CD4-positive, alpha-beta T cell (primary cell): ENCODE measurements at regions of chr3 and their contacts with region 1.

Region 1: DNA sequence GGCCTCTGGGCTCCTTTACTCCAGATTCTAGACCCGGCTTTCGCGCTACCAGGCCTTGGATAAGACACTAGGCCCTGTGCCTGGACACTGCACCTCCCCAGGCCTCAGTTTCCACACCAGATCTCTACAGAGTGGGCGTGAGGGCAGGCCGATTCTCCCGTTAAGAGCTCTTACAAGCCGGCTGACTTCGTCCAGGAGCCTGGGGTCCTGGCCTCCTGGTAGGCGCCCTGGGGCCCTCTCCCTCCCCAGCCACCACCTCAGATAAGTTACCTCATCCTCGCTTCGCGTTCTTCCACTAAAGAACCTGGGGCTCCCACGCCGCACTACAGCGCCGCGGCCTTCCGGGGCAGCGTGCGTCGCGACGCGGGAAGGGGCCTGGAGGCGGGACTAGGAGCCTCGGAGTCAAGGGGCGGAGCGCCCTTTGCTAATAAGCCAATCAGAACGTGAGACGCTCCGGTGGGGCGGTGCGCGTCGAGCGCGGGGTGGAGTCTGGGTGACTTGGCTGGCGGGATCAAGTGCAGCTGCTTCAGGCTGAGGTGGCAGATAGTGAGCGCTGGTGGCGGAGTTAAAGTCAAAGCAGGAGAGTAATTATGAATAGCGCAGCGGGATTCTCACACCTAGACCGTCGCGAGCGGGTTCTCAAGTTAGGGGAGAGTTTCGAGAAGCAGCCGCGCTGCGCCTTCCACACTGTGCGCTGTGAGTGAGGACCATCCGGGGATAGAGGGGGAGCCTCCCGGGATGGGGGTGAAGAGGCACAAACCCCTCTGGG is at the starts of genes EAF2 and IQCB1:
- DNase-seq: peak; percentile 90 to 98 (median 95)
- ATAC-seq: peak; percentile 95
- H3K4me3 ChIP-seq: peak within 1 kb of the TSS; percentile 70
- H3K4me3 Mint-ChIP-seq: peak within 1 kb of the TSS; percentile 92
- H3K27ac ChIP-seq: peak within 1 kb of the TSS; percentile 83 to 84
- H3K27ac Mint-ChIP-seq: peak within 1 kb of the TSS; percentile 79
- H3K4me1 ChIP-seq: peaks cover 25% of the 10 kb centered on the region
- H3K4me1 Mint-ChIP-seq: peaks cover 61% of the 10 kb centered on the region
- H3K27me3 ChIP-seq: no peaks in the 10 kb centered on the region
- H3K27me3 Mint-ChIP-seq: no peaks in the 10 kb centered on the region
- CTCF ChIP-seq: no peak
- total RNA-seq, gene EAF2: 3.7 to 4.4 TPM
- total RNA-seq, gene IQCB1: 39.6 to 41.3 TPM

Region 2: GRCh38 chr3:120348981-120349818 is 1485.7 kb before region 1 on chr3 and contains the start of gene LRRC58:
- CTCF ChIA-PET with region 1: no interaction called
- POLR2A ChIA-PET with region 1: interaction called, 5 read pairs
- intact Hi-C with region 1: loop called in 1 of 2 experiments (anchors 10 kb)
- DNase-seq: peak; percentile 78 to 96 (median 87)
- ATAC-seq: peak; percentile 86
- H3K4me3 ChIP-seq: peak within 1 kb of the TSS; percentile 65
- H3K4me3 Mint-ChIP-seq: peak within 1 kb of the TSS; percentile 93
- H3K27ac ChIP-seq: peak within 1 kb of the TSS; percentile 65 to 74
- H3K27ac Mint-ChIP-seq: peak within 1 kb of the TSS; percentile 94
- H3K4me1 ChIP-seq: peaks cover 18% of the 10 kb centered on the region
- H3K4me1 Mint-ChIP-seq: peaks cover 52% of the 10 kb centered on the region
- H3K27me3 ChIP-seq: peaks cover 0 to 3% of the 10 kb centered on the region in 2 experiments
- H3K27me3 Mint-ChIP-seq: no peaks in the 10 kb centered on the region
- CTCF ChIP-seq: peak; percentile 45
- total RNA-seq, gene LRRC58: 16.6 to 17.7 TPM

Region 3: DNA sequence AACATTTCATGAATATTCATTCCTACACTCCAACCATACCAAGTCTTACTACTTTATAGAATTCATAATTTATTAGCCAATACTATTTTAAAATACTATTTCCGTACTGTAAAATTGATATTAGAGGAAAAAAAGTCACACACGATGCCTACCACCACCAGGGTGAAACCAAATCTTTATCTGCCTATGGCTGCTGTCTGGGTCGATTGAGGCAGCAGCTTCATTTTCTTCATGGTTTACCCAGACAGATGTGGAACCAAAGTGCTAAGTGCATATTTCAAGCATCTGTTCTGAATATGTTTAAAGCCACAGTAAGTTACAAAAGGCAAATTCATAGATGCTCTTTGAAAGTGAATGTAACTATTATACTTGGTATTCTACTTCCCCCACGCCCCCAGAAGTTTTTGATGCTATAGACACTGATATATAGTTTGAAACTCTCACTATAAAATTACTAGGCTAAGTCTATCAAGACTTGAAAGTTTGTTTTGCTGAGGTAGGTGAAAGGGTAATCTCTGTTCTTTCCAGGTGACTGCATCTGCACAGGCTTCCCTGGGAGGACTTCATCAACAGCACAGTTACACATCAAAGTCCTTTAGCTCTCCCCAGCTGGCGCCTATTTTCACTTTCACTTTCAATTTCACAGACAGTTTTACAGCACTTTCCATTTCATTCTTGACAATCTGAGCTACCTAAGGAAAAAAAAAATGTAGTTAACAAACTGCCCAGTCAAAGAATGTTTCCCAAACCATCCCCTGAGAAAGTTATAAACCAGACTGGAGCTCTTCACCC is 403.0 kb before region 1 on chr3:
- CTCF ChIA-PET with region 1: no interaction called
- POLR2A ChIA-PET with region 1: no interaction called
- intact Hi-C with region 1: loop called in 1 of 2 experiments (anchors 5 kb)
- DNase-seq: peak; percentile 0 to 89 (median 28)
- ATAC-seq: peak; percentile 96
- H3K4me3 ChIP-seq: peak overlapping the region; percentile 28
- H3K4me3 Mint-ChIP-seq: peak overlapping the region; percentile 73
- H3K27ac ChIP-seq: no peak overlapping the region
- H3K27ac Mint-ChIP-seq: peak overlapping the region; percentile 82
- H3K4me1 ChIP-seq: peaks cover 4% of the 10 kb centered on the region
- H3K4me1 Mint-ChIP-seq: peaks cover 16% of the 10 kb centered on the region
- H3K27me3 ChIP-seq: no peaks in the 10 kb centered on the region
- H3K27me3 Mint-ChIP-seq: no peaks in the 10 kb centered on the region
- CTCF ChIP-seq: no peak

Region 4: DNA sequence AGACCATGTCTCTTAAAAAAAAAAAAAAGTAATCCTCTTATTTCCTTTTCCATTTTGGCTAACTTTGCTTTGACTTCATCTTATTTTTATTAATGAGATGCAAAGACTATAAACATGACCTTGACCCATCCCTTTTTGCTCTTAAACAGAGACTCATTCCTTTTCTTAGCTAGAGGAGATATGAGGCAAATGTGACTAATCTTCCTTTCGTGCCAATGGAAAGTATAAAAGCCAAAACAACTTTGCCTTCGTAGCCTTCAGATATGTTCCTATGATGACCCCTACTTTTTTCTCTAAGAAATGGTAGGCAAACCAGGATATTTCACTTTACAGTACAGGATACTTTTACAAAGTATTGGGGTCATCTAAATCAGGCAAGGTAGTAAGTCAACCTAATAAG is 48.4 kb before region 1 on chr3:
- CTCF ChIA-PET with region 1: interaction called, 3 read pairs
- POLR2A ChIA-PET with region 1: interaction called, 3 read pairs
- intact Hi-C with region 1: loop called in 1 of 2 experiments (anchors 2 kb)
- DNase-seq: no peak
- ATAC-seq: no peak
- H3K4me3 ChIP-seq: no peak overlapping the region
- H3K4me3 Mint-ChIP-seq: no peak overlapping the region
- H3K27ac ChIP-seq: no peak overlapping the region
- H3K27ac Mint-ChIP-seq: no peak overlapping the region
- H3K4me1 ChIP-seq: no peaks in the 10 kb centered on the region
- H3K4me1 Mint-ChIP-seq: no peaks in the 10 kb centered on the region
- H3K27me3 ChIP-seq: no peaks in the 10 kb centered on the region
- H3K27me3 Mint-ChIP-seq: no peaks in the 10 kb centered on the region
- CTCF ChIP-seq: no peak

Region 5: GRCh38 chr3:121894301-121894990 is 59.6 kb after region 1 on chr3 and contains the start of gene SLC15A2:
- CTCF ChIA-PET with region 1: no interaction called
- POLR2A ChIA-PET with region 1: no interaction called
- intact Hi-C with region 1: no loop called
- DNase-seq: no peak
- ATAC-seq: no peak
- H3K4me3 ChIP-seq: no peak within 1 kb of the TSS
- H3K4me3 Mint-ChIP-seq: no peak within 1 kb of the TSS
- H3K27ac ChIP-seq: no peak within 1 kb of the TSS
- H3K27ac Mint-ChIP-seq: no peak within 1 kb of the TSS
- H3K4me1 ChIP-seq: no peaks in the 10 kb centered on the region
- H3K4me1 Mint-ChIP-seq: no peaks in the 10 kb centered on the region
- H3K27me3 ChIP-seq: no peaks in the 10 kb centered on the region
- H3K27me3 Mint-ChIP-seq: no peaks in the 10 kb centered on the region
- CTCF ChIP-seq: no peak
- total RNA-seq, gene SLC15A2: 0.69 to 0.75 TPM

Region 6: DNA sequence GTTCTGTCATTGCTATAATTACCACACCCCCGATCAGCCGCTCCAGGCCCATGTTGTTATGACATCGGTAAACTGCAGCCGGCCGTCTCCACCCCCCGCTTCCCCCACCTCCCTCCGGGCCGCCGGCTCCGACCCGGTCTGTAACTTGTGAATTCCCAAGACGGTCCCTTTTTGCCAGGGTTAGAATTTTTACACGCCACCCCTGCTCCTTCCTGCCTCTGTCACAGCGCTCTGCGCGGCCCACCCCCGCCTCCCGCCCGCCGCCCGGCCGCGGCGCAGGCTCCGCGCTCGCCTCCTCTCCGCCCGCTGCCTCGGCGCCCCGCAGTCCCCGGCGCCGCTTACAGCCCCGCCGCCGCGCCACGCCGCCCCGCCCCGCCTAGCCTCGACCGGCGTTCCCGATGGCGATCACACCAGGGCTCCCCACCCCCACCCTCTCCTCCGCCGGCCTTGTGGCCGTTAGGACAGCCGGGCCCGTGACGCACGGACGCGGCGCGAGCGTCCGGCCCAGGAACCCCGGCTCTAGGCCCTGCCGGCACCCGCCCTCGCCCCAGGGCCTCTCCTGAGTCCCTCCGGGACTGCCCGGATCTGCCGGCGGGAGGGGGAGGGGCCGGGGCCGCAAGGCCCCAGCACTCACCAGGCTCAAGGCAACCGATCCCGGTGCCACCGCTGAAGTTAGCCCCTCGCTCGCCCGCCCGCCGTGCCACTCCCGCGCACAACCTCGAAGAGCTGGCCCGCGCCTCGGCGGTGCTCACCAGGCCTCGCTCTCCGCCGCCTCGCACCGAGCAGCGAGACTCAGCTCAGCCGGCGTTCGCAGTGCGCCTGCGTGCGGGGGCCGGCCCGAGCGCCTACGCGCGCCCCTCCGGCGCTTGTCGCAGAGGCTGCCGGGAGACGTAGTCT is 679.5 kb after region 1 on chr3 and contains the start of gene KPNA1:
- CTCF ChIA-PET with region 1: no interaction called
- POLR2A ChIA-PET with region 1: no interaction called
- intact Hi-C with region 1: loop called in 1 of 2 experiments (anchors 10 kb)
- DNase-seq: peak; percentile 70 to 95 (median 82)
- ATAC-seq: peak; percentile 85
- H3K4me3 ChIP-seq: peak within 1 kb of the TSS; percentile 68
- H3K4me3 Mint-ChIP-seq: peak within 1 kb of the TSS; percentile 89
- H3K27ac ChIP-seq: peak within 1 kb of the TSS; percentile 83 to 97
- H3K27ac Mint-ChIP-seq: peak within 1 kb of the TSS; percentile 82
- H3K4me1 ChIP-seq: peaks cover 17% of the 10 kb centered on the region
- H3K4me1 Mint-ChIP-seq: peaks cover 44% of the 10 kb centered on the region
- H3K27me3 ChIP-seq: no peaks in the 10 kb centered on the region
- H3K27me3 Mint-ChIP-seq: no peaks in the 10 kb centered on the region
- CTCF ChIP-seq: no peak
- total RNA-seq, gene KPNA1: 46.2 to 49.8 TPM

Region 7: GRCh38 chr3:123201566-123202427 is 1366.9 kb after region 1 on chr3 and contains the start of gene SEC22A:
- CTCF ChIA-PET with region 1: no interaction called
- POLR2A ChIA-PET with region 1: no interaction called
- intact Hi-C with region 1: loop called in 1 of 2 experiments (anchors 5 kb)
- DNase-seq: peak; percentile 88 to 99 (median 94)
- ATAC-seq: peak; percentile 95
- H3K4me3 ChIP-seq: peak within 1 kb of the TSS; percentile 88
- H3K4me3 Mint-ChIP-seq: peak within 1 kb of the TSS; percentile 89
- H3K27ac ChIP-seq: peak within 1 kb of the TSS; percentile 96 to 98
- H3K27ac Mint-ChIP-seq: peak within 1 kb of the TSS; percentile 98
- H3K4me1 ChIP-seq: peaks cover 20% of the 10 kb centered on the region
- H3K4me1 Mint-ChIP-seq: peaks cover 44% of the 10 kb centered on the region
- H3K27me3 ChIP-seq: no peaks in the 10 kb centered on the region
- H3K27me3 Mint-ChIP-seq: no peaks in the 10 kb centered on the region
- CTCF ChIP-seq: no peak
- total RNA-seq, gene SEC22A: 7.9 to 11.5 TPM

Region 8: GRCh38 chr3:123244128-123244527 is 1409.2 kb after region 1 on chr3:
- CTCF ChIA-PET with region 1: no interaction called
- POLR2A ChIA-PET with region 1: no interaction called
- intact Hi-C with region 1: no loop called
- DNase-seq: peak in 12 of 14 experiments; percentile 5 to 49 (median 12)
- ATAC-seq: no peak
- H3K4me3 ChIP-seq: no peak overlapping the region
- H3K4me3 Mint-ChIP-seq: no peak overlapping the region
- H3K27ac ChIP-seq: no peak overlapping the region
- H3K27ac Mint-ChIP-seq: no peak overlapping the region
- H3K4me1 ChIP-seq: no peaks in the 10 kb centered on the region
- H3K4me1 Mint-ChIP-seq: peaks cover 40% of the 10 kb centered on the region
- H3K27me3 ChIP-seq: no peaks in the 10 kb centered on the region
- H3K27me3 Mint-ChIP-seq: no peaks in the 10 kb centered on the region
- CTCF ChIP-seq: no peak